Activated B cell treated with CpG ODN at 0.5 μM for 24 hours (primary cell): ENCODE measurements at regions of chr1 and their contacts with region 1.

Region 1: GRCh38 chr1:181134543-181135362 is 46.3 kb downstream of the IER5 start:
- DNase-seq: peak; percentile 63
- ATAC-seq: peak; percentile 49
- H3K4me3 Mint-ChIP-seq: peak overlapping the region; percentile 84
- H3K27ac Mint-ChIP-seq: peak overlapping the region; percentile 99
- H3K4me1 Mint-ChIP-seq: peaks cover 94% of the 10 kb centered on the region
- H3K27me3 Mint-ChIP-seq: no peaks in the 10 kb centered on the region
- CTCF ChIP-seq: no peak

Region 2: GRCh38 chr1:180851995-180852887 is 282.5 kb before region 1 on chr1:
- CTCF ChIA-PET with region 1: no interaction called
- POLR2A ChIA-PET with region 1: no interaction called
- intact Hi-C with region 1: no loop called
- DNase-seq: no peak
- ATAC-seq: peak; percentile 37
- H3K4me3 Mint-ChIP-seq: peak overlapping the region; percentile 20
- H3K27ac Mint-ChIP-seq: no peak overlapping the region
- H3K4me1 Mint-ChIP-seq: peaks cover 31% of the 10 kb centered on the region
- H3K27me3 Mint-ChIP-seq: no peaks in the 10 kb centered on the region
- CTCF ChIP-seq: no peak

Region 3: DNA sequence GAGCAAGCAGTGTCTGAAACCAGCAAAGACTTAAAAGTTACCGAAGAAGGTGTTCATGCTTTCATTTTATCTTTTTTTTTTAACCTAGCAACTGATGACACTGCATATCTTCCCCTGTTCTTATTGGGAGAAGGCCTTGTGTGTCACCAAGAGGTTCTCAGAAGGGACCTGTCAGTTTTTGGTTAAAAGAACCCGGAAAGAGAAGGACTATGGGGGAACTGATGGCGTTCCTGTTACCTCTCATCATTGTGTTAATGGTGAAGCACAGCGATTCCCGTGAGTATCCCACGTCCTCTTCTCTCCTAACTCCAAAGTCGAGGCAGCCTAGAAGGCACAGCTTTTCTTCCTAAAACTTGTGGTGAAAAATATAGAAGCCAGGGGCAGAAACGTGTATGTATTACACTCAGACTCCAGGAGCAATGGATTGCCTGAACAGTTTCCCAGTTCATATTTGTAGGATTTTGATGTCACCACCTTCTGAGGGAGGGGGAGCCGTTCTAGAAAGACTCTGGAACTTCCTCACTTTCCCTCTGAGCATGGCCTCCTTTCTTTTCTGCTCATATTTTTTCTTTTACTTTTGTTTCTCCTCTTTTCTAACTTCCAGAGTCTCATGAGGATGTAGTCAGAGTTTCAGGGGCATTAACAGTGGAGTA is 100.8 kb before region 1 on chr1 and contains the start of gene MR1:
- CTCF ChIA-PET with region 1: interaction called, 112 read pairs
- POLR2A ChIA-PET with region 1: interaction called, 11 read pairs
- intact Hi-C with region 1: no loop called
- DNase-seq: no peak
- ATAC-seq: peak; percentile 96
- H3K4me3 Mint-ChIP-seq: peak within 1 kb of the TSS; percentile 98
- H3K27ac Mint-ChIP-seq: peak within 1 kb of the TSS; percentile 99
- H3K4me1 Mint-ChIP-seq: peaks cover 60% of the 10 kb centered on the region
- H3K27me3 Mint-ChIP-seq: no peaks in the 10 kb centered on the region
- CTCF ChIP-seq: no peak
- total RNA-seq, gene MR1: 24.3 and 24.8 TPM in 2 replicates

Region 4: DNA sequence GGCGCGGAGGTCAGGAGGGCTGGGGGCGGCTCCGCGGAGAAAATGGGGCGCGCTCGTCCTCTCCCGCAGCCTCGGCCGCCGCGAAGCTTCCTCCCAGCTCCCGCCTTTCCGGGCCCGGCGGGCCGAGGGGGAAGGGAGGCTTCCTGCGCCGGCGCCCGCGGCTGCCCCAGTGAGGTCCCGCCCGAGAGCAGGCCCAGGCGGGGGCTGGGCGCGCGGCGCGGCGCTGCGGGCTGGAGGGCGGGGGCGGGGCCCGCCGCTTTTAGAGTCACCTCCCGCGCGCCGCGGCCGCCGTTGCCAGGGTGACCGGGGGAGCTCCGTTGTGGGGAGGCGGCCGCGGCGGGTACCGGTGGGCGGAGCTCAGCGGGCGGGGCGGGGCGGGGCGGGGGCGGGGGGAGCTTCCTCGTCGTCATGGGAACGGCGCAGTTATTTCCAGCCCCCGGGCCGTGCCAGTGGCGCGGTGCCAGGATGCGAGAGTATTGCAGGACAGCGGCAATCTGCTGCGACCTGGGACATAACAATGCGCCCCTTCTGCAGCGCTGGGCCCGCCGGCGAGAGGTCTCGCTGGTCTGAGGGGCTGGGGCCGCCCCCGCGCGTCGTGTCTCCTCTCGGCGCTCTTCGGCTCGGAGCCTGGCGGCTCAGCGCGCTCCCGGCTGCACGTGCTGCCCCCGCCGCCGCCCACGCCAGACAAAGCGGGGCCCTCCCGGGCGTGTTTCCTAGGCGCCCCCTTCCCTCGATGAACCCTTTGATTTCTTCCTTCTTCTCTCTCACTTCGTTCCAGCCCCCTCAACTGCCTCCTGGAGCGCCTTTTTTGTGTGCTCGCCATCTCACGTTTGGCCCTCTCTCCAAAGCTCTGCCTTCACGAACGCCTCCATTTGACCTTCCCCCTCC is 29.4 kb before region 1 on chr1:
- CTCF ChIA-PET with region 1: interaction called, 25 read pairs
- POLR2A ChIA-PET with region 1: interaction called, 1,783 read pairs
- intact Hi-C with region 1: loop called (anchors 1 kb)
- DNase-seq: peak; percentile 88
- ATAC-seq: peak; percentile 87
- H3K4me3 Mint-ChIP-seq: peak overlapping the region; percentile 85
- H3K27ac Mint-ChIP-seq: peak overlapping the region; percentile 89
- H3K4me1 Mint-ChIP-seq: peaks cover 40% of the 10 kb centered on the region
- H3K27me3 Mint-ChIP-seq: no peaks in the 10 kb centered on the region
- CTCF ChIP-seq: no peak

Region 5: GRCh38 chr1:181152892-181153633 is 18.3 kb after region 1 on chr1:
- CTCF ChIA-PET with region 1: interaction called, 29 read pairs
- POLR2A ChIA-PET with region 1: interaction called, 16 read pairs
- intact Hi-C with region 1: no loop called
- DNase-seq: peak; percentile 48
- ATAC-seq: peak; percentile 86
- H3K4me3 Mint-ChIP-seq: peak overlapping the region; percentile 71
- H3K27ac Mint-ChIP-seq: peak overlapping the region; percentile 64
- H3K4me1 Mint-ChIP-seq: peaks cover 48% of the 10 kb centered on the region
- H3K27me3 Mint-ChIP-seq: no peaks in the 10 kb centered on the region
- CTCF ChIP-seq: no peak

Region 6: DNA sequence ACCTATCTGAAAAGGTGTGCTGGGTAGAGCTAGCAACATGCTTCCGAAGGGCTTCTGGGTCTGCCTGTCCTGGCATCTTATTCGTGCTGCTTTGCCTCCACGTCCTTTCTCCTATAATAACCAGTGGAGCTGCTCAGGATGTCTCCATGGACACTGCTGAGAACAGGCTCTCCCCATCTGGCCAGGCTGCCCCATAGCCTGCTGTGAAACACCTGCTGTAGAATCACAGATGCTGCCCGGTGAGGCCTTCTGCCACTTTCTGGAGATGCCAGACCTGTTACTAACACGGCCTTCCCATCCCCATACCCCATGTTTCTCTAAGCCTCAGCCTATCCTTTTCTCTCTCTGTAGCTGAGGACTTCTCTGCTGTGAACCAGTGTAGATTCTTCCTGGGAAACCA is 74.2 kb after region 1 on chr1:
- CTCF ChIA-PET with region 1: no interaction called
- POLR2A ChIA-PET with region 1: no interaction called
- intact Hi-C with region 1: no loop called
- DNase-seq: no peak
- ATAC-seq: no peak
- H3K4me3 Mint-ChIP-seq: no peak overlapping the region
- H3K27ac Mint-ChIP-seq: no peak overlapping the region
- H3K4me1 Mint-ChIP-seq: no peaks in the 10 kb centered on the region
- H3K27me3 Mint-ChIP-seq: peaks cover 14% of the 10 kb centered on the region
- CTCF ChIP-seq: no peak